Endothelial cell of umbilical vein (primary cell): ENCODE measurements at regions of chr16 and their contacts with region 1.

Region 1: DNA sequence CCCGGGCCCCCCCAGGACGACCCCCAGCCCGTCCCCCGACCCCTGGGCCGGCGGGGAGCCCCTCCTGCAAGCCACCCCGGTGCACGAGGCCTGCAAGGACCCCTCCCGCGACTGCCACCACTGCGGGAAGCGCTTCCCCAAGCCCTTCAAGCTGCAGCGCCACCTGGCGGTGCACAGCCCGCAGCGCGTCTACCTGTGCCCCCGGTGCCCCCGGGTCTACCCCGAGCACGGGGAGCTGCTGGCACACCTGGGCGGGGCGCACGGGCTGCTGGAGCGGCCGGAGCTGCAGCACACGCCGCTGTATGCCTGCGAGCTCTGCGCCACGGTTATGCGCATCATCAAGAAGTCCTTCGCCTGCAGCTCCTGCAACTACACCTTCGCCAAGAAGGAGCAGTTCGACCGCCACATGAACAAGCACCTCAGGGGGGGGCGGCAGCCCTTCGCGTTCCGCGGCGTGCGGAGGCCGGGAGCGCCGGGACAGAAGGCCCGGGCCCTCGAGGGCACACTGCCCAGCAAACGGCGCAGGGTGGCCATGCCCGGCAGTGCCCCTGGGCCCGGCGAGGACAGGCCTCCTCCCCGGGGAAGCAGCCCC is 15.6 kb upstream of the ZFPM1 start:
- DNase-seq: peak; percentile 17
- H3K4me3 ChIP-seq: no peak overlapping the region
- H3K27ac ChIP-seq: no peak overlapping the region
- H3K4me1 ChIP-seq: no peaks in the 10 kb centered on the region
- H3K27me3 ChIP-seq: no peaks in the 10 kb centered on the region
- CTCF ChIP-seq: peak; percentile 79 to 94
- POLR2A ChIP-seq: no peak

Region 2: DNA sequence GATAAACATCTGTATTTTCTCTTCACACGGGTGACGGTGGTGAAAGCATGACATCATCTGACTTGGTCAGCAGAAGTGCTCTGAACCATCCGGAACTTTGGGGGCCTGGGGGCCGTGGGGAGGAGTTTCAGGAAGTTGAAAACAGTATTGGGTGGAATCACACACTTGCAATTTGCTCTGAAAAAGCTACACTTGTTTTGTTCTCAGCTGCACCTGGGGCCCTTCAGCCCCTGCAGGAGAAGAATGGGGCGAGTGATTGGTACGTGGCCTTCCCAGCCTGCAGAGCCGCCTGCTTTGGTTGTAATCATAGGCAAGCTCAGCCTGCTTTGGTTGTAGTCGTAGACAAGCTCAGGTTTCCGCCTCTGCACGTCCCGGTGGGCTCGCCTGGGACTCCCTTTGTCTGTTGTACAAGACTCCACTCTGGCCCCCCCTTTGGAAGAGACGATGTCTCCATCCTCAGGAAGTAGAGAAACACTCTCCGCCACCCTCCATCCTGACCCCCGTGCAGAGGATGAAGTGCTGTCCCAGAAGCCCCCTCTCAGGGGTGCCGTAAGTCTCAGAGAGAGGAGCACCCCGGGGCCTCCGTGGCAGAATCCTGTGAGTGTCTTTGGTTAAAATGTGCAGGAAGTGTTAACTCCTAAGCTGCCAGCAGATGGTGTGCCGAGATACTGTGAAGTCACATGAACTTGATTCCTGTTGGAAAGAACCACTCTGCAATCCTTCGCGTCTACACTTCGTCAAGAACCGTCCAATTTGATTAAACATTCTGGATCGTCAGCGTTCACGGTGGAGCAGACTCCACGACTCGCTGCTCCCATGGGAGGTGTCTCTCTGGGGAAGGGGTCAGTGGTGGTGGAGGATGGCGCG is 480.9 kb before region 1 on chr16:
- CTCF ChIA-PET with region 1: interaction called, 13 read pairs
- POLR2A ChIA-PET with region 1: no interaction called
- dilution Hi-C with region 1: no loop called
- intact Hi-C with region 1: loop called (anchors 2 kb)
- DNase-seq: peak; percentile 54
- H3K4me3 ChIP-seq: no peak overlapping the region
- H3K27ac ChIP-seq: peak overlapping the region; percentile 72
- H3K4me1 ChIP-seq: peaks cover 40% of the 10 kb centered on the region
- H3K27me3 ChIP-seq: no peaks in the 10 kb centered on the region
- CTCF ChIP-seq: peak; percentile 29 to 39
- POLR2A ChIP-seq: no peak

Region 3: GRCh38 chr16:87982491-87983415 is 454.7 kb before region 1 on chr16:
- CTCF ChIA-PET with region 1: interaction called, 12 read pairs
- POLR2A ChIA-PET with region 1: no interaction called
- dilution Hi-C with region 1: no loop called
- intact Hi-C with region 1: no loop called
- DNase-seq: no peak
- H3K4me3 ChIP-seq: no peak overlapping the region
- H3K27ac ChIP-seq: no peak overlapping the region
- H3K4me1 ChIP-seq: no peaks in the 10 kb centered on the region
- H3K27me3 ChIP-seq: no peaks in the 10 kb centered on the region
- CTCF ChIP-seq: no peak
- POLR2A ChIP-seq: no peak

Region 4: GRCh38 chr16:88022076-88023062 is 415.1 kb before region 1 on chr16:
- CTCF ChIA-PET with region 1: interaction called, 5 read pairs
- POLR2A ChIA-PET with region 1: no interaction called
- dilution Hi-C with region 1: no loop called
- intact Hi-C with region 1: loop called (anchors 10 kb)
- DNase-seq: no peak
- H3K4me3 ChIP-seq: no peak overlapping the region
- H3K27ac ChIP-seq: no peak overlapping the region
- H3K4me1 ChIP-seq: peaks cover 7% of the 10 kb centered on the region
- H3K27me3 ChIP-seq: no peaks in the 10 kb centered on the region
- CTCF ChIP-seq: no peak
- POLR2A ChIP-seq: no peak

Region 5: DNA sequence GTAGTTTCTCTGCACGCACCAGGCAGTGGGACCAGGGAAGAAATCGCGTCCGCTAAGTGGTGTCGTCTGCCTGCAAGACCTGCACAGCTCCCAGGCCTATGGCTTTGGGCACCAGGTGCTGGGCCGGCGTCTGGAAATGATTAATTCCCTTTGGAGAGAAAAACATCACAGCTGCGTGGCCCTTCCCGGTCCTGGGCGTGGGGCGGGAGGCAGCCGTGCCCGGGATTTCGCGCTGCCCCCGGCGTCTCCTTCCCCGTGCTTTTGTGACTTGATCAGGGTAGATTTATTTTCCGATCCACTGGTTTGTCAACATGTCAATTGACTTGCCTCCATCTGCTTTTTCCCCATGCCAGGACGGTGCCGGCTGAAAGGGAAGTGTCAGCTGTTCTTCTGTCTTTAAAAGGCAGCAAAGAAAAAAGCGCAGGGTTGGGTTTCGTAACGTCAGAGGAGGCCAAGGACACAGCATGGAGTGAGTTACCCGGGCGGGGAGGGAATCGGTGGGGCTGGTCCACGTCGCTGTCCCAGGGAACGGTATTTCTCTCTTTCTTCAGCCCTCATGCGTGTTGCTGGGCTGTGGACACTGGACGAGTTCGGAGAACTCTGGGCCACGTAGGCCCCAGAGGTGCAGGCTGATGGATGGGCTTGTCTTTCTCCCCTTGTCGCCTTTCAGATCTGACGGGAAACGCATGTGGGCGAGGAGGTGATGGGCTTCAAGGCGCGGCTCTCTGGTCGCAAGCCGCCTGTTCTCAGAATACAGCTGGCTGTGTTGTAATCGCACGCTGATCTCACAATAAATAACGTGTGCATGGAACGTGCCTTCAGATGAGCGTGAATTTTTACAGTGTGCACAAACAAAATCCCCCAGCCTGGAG is 242.8 kb before region 1 on chr16:
- CTCF ChIA-PET with region 1: interaction called, 10 read pairs
- POLR2A ChIA-PET with region 1: no interaction called
- dilution Hi-C with region 1: no loop called
- intact Hi-C with region 1: no loop called
- DNase-seq: no peak
- H3K4me3 ChIP-seq: no peak overlapping the region
- H3K27ac ChIP-seq: no peak overlapping the region
- H3K4me1 ChIP-seq: no peaks in the 10 kb centered on the region
- H3K27me3 ChIP-seq: no peaks in the 10 kb centered on the region
- CTCF ChIP-seq: no peak
- POLR2A ChIP-seq: no peak